ENCODE measurements at regions of chr16 and their contacts with region 1.

Region 1: DNA sequence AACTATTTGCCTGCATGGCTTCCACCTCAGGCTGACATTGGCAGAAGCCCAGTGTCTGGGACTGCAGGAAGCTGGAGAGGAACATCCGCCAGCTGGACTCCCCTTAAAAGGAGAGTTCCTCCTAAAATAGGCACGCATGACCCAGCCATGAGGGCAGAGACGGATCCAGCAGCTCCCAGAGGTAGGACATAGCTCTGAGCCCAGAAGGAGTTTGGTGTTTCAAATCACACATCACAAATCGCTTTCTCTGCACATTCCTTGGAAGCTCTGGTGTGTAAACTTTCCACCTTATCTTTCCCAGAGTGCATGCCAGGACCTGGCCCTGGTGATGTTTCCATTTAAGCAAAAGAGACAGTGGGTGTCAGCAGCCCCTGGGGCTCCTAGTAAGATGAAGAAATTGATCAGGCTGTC is 231.1 kb upstream of the CDH5 start:
- DNase-seq: no peak

Region 2: DNA sequence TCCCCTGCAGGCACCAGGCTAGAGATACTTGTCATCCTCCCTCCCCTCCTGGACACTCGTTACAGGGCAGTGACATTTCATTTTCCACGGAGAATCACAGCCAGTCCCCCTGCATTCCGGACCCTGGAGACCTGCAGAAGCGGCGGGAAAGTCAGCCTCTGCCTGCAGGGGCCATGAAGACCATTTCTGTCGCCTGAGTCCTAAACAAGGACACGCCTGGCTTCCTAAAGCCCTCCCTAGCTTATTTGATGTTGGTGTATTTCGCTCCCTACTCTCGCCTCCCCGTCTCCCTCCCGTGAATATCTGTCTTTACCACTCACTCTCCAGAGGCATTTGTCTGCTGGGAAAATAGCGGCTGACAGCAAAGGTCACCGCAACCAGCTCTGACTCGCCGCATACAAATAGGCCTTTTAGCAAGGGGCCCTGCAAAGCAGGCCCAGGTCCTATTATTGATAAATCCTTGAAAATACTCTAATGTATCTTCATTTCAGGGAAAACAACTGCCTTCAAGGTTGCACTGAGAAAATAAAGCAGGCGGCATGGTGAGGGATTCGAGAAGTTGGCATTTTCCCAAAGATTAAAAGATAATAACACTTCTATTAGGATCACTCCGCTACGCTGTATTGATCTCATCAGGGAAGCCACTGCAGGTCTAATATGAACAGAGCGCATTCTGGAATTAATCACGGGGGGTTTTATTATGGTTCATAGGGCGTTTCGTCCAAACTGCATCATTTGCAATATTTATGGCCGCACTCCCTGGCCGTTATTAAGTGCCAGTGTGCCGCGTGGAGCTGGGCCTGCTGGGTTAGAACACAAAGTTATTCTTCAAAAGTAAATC is 216.1 kb before region 1 on chr16:
- intact Hi-C with region 1: no loop called
- DNase-seq: no peak

Region 3: GRCh38 chr16:66065925-66066324 is 69.5 kb before region 1 on chr16:
- intact Hi-C with region 1: loop called in 1 of 2 experiments (anchors 10 kb)
- DNase-seq: no peak

Region 4: DNA sequence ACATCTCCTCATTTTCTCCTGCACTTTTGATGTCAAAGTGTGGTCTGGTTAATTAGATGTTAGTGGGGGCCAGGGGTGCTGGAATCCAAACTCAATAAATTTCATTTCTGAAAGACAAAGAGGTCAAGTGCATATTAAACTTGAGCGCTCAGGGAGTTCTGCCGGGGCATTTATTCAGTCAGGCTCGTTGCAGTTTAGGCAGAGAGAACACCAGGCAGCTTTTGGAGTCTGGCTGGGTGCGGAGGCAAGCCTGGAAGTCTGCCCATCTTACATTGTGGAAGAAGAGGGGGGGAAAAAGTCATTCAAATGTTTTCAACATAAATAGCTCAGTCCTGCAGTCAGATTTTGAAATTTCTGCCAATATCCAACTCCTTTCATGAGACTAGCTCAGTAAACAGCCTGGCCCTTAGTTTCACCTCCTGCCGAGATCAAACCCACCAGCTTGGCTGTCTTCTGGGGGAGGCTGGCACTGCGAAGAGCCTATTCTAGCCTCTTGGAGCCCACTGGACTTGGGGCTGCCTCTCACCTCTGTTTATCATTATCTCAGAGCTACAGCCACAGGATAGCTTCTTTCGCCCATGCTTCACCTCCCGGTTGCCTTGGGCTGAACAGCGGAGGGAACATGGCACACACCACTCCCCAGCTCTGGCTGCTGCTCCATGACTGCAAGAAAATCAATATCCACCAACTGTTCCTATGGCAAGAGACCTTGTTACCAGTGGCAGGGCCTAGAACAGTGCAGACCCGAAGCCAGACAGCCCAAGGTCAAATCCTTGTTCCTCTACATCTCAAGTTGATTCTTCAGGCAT is 53.7 kb after region 1 on chr16:
- intact Hi-C with region 1: no loop called
- DNase-seq: no peak

Region 5: DNA sequence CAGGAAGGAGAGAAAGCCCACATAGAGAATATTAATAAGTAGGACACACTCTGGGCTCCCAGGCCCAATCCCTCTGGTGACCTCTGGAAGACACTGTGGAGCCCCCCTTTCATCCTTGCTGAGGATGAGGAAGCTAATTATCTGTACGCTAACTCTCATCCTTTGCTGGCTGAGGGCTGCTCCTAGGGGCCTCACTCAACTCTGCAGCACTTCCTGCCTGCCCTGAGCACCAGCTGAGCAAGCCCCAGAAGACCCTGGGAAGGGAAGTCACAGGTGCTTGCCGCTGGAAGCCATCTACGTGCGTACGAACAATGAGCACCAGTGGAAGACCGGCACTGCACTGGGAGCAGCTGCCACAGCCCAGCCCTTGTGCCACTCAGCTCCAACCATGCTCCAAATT is 85.3 kb after region 1 on chr16:
- intact Hi-C with region 1: no loop called
- DNase-seq: no peak